ENCODE measurements at regions of chr17 and their contacts with region 1.

Region 1: GRCh38 chr17:3845621-3846441 is at the start of gene NCBP3:
- DNase-seq: peak; percentile 85
- ATAC-seq: peak; percentile 96
- H3K4me3 ChIP-seq: peak within 1 kb of the TSS; percentile 84 to 91
- H3K27ac ChIP-seq: peak within 1 kb of the TSS; percentile 81
- H3K4me1 ChIP-seq: peaks cover 5 to 20% of the 10 kb centered on the region in 2 experiments; a peak in 3 of 4 replicates
- H3K27me3 ChIP-seq: no peaks in the 10 kb centered on the region
- CTCF ChIP-seq: peak; percentile 73 to 94 (median 81); a peak in 5 of 6 replicates
- POLR2A ChIP-seq: peak; percentile 65
- RAD21 ChIP-seq: no peak
- total RNA-seq, gene NCBP3: 46.5 TPM

Region 2: DNA sequence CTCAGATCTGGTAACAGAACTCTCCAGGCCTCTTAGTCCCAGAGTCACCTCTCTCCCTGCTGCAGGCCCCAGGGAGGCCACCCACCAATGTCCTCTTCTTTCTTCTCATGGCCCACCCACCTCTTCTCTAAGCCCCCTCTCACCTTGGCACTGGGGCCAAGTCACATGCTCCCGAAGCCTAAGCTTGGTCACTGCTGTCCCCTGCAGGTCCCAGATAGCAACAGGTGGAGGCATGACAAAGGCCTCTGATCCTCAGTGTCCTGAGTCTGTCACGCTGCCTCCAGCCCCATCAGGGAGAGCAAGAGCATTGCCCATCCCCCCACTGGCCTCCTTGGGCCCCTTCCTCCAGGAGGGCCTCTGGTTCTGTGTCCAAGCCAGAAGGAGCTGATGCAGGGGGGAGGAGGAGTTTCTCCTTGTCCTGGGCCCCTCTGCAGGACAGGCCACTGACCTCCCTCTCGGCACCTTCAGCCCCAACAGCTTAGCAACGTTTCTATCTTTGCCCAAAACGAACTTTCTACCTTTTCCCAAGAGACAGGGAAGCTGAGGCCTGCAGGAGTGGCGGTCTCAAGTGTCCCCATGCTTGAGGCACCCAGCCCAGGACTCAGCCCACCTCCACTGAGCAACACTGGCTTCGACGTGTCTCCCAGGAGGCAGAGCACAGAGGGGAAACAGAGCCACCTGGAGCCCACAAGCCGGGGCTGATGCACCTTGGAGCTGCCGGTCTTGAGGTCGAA is 61.8 kb after region 1 on chr17:
- CTCF ChIA-PET with region 1: interaction called, 48 read pairs
- POLR2A ChIA-PET with region 1: no interaction called
- RAD21 ChIA-PET with region 1: interaction called in 1 of 2 experiments, 3 read pairs
- intact Hi-C with region 1: loop called (anchors 1 kb)
- DNase-seq: no peak
- ATAC-seq: peak; percentile 77
- H3K4me3 ChIP-seq: no peak overlapping the region
- H3K27ac ChIP-seq: no peak overlapping the region
- H3K4me1 ChIP-seq: no peaks in the 10 kb centered on the region
- H3K27me3 ChIP-seq: no peaks in the 10 kb centered on the region
- CTCF ChIP-seq: peak; percentile 64 to 89 (median 65)
- POLR2A ChIP-seq: no peak
- RAD21 ChIP-seq: peak; percentile 96

Region 3: GRCh38 chr17:3913531-3914311 is 67.9 kb after region 1 on chr17:
- CTCF ChIA-PET with region 1: interaction called, 31 read pairs
- POLR2A ChIA-PET with region 1: no interaction called
- RAD21 ChIA-PET with region 1: interaction called, 3 read pairs
- intact Hi-C with region 1: no loop called
- DNase-seq: peak; percentile 54
- ATAC-seq: peak; percentile 95
- H3K4me3 ChIP-seq: no peak overlapping the region
- H3K27ac ChIP-seq: no peak overlapping the region
- H3K4me1 ChIP-seq: peaks cover 0 to 8% of the 10 kb centered on the region in 2 experiments; a peak in 2 of 4 replicates
- H3K27me3 ChIP-seq: no peaks in the 10 kb centered on the region
- CTCF ChIP-seq: peak; percentile 78 to 98 (median 96)
- POLR2A ChIP-seq: no peak
- RAD21 ChIP-seq: peak; percentile 91

Region 4: DNA sequence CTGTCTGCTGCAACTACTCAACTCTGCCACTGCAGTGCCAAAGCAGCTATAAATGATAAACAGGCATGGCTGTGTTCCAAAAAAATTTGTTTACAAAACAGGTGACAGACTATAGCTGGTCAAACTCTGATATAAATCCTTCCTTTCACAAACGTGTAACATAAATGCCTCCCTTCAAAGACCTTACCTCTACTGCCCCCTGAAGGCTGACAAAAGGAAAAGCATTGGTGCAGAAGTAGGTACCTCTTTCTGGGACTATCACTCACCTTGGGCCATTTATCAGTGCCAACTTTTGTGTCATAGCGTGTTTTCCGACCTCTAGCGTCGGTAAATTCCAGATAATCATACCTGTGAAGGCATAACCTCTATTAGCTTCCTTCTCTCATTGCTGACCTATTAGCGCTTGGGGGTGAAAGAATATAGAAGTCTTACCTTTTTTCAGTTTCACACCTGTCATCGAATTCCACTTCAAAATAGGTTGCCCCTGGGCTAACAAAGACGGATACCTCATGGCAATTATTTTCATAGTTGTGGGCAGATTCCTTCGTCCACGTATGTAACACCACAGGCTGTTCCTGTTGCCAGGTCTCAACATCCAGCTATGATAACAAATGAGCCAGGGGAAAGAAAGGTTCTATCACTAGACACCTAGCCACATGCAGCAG is 229.1 kb after region 1 on chr17:
- CTCF ChIA-PET with region 1: interaction called, 3 read pairs
- POLR2A ChIA-PET with region 1: no interaction called
- RAD21 ChIA-PET with region 1: interaction called in 1 of 2 experiments, 4 read pairs
- intact Hi-C with region 1: loop called (anchors 10 kb)
- DNase-seq: peak; percentile 27
- ATAC-seq: peak; percentile 90
- H3K4me3 ChIP-seq: no peak overlapping the region
- H3K27ac ChIP-seq: no peak overlapping the region
- H3K4me1 ChIP-seq: no peaks in the 10 kb centered on the region
- H3K27me3 ChIP-seq: no peaks in the 10 kb centered on the region
- CTCF ChIP-seq: peak; percentile 53 to 78 (median 74); a peak in 5 of 6 replicates
- POLR2A ChIP-seq: no peak
- RAD21 ChIP-seq: peak; percentile 64

Region 5: DNA sequence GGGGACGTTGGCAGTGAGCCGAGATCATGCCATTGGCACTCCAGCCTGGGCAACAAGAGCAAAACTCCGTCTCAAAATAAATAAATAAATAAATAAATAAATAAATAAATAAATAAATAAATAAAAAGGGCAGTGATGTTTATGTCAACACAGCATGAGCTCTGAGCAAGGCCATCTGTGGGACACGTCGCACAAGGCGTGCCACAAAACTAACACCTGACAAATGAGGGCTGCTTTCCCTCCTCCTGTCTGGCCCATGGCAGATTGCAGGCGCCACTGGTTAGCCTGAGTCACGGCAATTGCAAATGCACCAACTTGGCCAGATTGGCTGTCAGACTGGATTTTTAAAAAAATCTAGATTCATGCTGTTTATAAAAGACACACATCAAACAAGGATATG is 562.0 kb after region 1 on chr17:
- CTCF ChIA-PET with region 1: no interaction called
- POLR2A ChIA-PET with region 1: no interaction called
- RAD21 ChIA-PET with region 1: no interaction called
- intact Hi-C with region 1: loop called (anchors 5 kb)
- DNase-seq: no peak
- ATAC-seq: no peak
- H3K4me3 ChIP-seq: no peak overlapping the region
- H3K27ac ChIP-seq: no peak overlapping the region
- H3K4me1 ChIP-seq: peaks cover 0 to 1% of the 10 kb centered on the region in 2 experiments; a peak in 1 of 4 replicates
- H3K27me3 ChIP-seq: no peaks in the 10 kb centered on the region
- CTCF ChIP-seq: no peak
- POLR2A ChIP-seq: no peak
- RAD21 ChIP-seq: no peak

Measured in HCT116 (cell line).